Tibial artery (tissue), 4 donors: ENCODE measurements at regions of chr6 and their contacts with region 1.

Region 1: DNA sequence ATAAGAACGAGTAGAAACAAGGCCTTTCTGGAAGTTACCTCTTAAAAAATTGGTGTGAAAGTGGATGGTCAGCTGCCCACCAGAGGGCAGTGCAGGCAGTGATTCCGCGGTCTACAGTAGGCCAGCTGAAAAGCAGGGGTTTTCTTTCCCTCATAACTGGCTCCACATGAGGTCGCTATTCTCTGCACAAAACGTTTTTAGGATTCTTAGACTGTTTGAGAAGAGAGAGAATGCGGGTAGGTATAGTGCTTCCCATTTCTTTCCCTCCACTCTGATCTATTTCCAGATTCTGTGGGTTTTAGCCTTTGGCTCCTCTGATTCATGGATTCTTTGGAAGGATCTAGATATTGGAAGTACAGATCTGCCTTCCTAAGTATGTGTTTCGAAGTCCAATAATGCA is 14.2 kb downstream of the FIG4 start:
- DNase-seq: peak; percentile 74 to 85
- H3K4me3 ChIP-seq: no peak overlapping the region
- H3K27ac ChIP-seq: no peak overlapping the region
- H3K4me1 ChIP-seq: peaks cover 0 to 10% (median 0%) of the 10 kb centered on the region in 4 donors
- H3K27me3 ChIP-seq: no peaks in the 10 kb centered on the region
- CTCF ChIP-seq: peak; percentile 96 to 97

Region 2: DNA sequence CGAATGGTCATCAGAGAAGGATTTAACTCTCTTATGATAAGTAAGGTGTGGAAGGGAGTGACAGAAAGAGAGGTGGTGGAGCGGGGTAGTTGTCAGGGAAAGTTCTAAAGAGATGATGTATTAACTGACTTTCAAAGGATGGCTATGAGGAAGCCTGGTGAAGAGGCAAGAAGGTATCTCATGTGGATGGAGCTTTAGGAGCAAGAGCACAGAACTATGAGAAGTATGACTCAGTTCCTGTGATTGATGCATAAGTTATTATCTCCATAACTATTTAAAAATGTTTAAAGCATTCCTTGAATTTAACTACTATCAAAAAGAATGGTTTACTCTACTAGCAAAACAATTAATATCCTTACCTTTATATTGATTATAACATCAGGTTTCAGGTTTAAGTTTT is 43.1 kb before region 1 on chr6:
- intact Hi-C with region 1: no loop called
- DNase-seq: no peak
- H3K4me3 ChIP-seq: no peak overlapping the region
- H3K27ac ChIP-seq: no peak overlapping the region
- H3K4me1 ChIP-seq: no peaks in the 10 kb centered on the region
- H3K27me3 ChIP-seq: no peaks in the 10 kb centered on the region
- CTCF ChIP-seq: no peak

Region 3: GRCh38 chr6:110039364-110039980 is 334.2 kb after region 1 on chr6:
- intact Hi-C with region 1: loop called (anchors 5 kb)
- DNase-seq: peak; percentile 84 to 88
- H3K4me3 ChIP-seq: peak overlapping the region; percentile 1 to 40
- H3K27ac ChIP-seq: no peak overlapping the region
- H3K4me1 ChIP-seq: peaks cover 0 to 8% (median 2%) of the 10 kb centered on the region in 4 donors
- H3K27me3 ChIP-seq: no peaks in the 10 kb centered on the region
- CTCF ChIP-seq: peak; percentile 85 to 95

Region 4: DNA sequence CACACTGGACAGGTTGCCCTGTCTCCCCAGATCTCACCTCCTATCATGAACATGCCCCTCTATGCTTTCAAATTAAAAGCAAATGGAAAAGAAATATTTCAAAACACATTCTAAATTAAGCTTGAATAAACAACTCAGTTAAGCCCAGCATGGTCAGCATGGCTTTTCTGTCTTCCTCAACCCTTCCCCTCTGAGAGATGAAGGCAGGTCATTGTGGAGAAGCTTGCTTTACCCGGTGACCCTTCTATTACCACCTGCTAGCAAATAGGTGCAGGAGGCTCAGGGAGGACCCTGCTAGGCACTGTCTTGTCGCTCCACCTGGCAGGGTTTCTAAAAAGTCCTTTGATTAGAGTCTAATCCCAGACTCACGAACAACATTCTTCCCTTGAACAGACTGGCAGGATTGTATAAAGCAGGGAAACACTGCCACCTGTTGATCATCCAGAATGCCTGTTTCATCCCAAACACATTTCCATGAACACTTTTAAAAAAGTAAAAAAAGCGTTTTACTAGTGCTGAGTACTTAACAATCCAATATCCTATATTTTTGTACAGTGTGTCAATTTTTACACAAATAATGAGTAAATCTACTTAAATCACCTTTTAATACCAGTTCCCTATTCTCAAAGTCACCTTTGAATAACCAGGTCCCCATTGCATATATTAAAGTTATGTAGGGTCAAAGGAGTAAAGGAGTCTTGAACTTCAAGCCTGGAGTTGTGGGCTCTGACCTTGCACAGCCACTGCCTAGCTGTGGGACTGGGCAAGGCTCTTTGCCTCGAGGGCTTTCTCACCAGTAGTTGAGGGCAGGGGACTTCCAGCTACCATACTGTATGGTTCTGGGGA is 348.4 kb after region 1 on chr6:
- intact Hi-C with region 1: loop called (anchors 5 kb)
- DNase-seq: no peak
- H3K4me3 ChIP-seq: no peak overlapping the region
- H3K27ac ChIP-seq: no peak overlapping the region
- H3K4me1 ChIP-seq: peaks cover 0 to 5% (median 2%) of the 10 kb centered on the region in 4 donors
- H3K27me3 ChIP-seq: peaks cover 0 to 2% of the 10 kb centered on the region in 2 donors
- CTCF ChIP-seq: peak; percentile 69 to 70

Region 5: GRCh38 chr6:110398778-110399177 is 693.5 kb after region 1 on chr6:
- intact Hi-C with region 1: loop called (anchors 10 kb)
- DNase-seq: no peak
- H3K4me3 ChIP-seq: no peak overlapping the region
- H3K27ac ChIP-seq: peak overlapping the region in 1 of 2 donors; percentile 62
- H3K4me1 ChIP-seq: peaks cover 0 to 23% (median 2%) of the 10 kb centered on the region in 4 donors
- H3K27me3 ChIP-seq: no peaks in the 10 kb centered on the region
- CTCF ChIP-seq: no peak